Naive thymus-derived CD4-positive, alpha-beta T cell (primary cell): ENCODE measurements at regions of chr12 and their contacts with region 1.

Region 1: DNA sequence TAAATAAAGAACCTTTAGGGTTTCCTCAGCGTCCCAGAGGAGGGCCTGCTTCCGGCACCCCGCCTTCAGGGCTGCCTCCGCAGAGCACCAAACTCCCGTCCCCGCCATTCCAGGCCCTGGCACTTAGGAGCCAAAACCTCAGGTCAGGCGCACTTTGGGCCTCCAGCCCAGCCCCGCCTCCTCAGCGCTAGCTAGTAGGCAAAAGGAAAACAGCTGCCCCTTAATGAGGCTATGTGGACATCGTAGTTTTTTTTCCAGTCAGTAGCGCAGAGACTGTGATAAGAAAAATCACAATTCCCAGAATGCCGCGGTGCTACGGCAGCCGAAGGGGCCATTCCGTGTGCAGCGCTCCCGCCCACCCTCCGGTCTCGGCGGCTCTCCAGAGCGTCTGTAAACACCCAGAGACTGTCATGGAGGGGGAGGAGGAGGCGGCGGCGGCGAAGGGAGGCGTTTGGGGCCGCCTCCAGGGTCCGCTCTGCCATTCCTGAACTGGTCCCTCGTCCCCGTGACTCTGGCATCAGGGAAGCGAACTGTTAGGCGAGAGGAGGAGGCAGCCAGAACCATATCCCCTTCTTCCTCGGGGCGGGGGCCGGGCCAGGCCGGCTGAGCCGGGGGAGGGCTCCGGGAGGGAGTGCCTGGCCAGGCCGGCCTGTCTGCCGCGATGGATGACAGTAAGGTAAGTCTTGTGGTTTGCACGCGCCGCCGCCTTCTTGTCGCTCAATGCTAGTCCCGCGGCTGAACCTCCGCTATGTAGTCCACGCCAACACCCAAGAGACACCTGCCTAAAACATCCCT is at the start of gene CREBL2:
- DNase-seq: peak; percentile 61 to 91 (median 89)
- ATAC-seq: peak; percentile 97
- H3K4me3 ChIP-seq: peak within 1 kb of the TSS; percentile 94
- H3K4me3 Mint-ChIP-seq: peak within 1 kb of the TSS; percentile 84 to 99 (median 93)
- H3K27ac ChIP-seq: peak within 1 kb of the TSS; percentile 98
- H3K27ac Mint-ChIP-seq: peak within 1 kb of the TSS; percentile 91 to 100 (median 99)
- H3K4me1 ChIP-seq: peaks cover 12 to 18% of the 10 kb centered on the region in 2 donors
- H3K4me1 Mint-ChIP-seq: peaks cover 38 to 74% (median 57%) of the 10 kb centered on the region in 7 donors
- H3K27me3 ChIP-seq: no peaks in the 10 kb centered on the region
- H3K27me3 Mint-ChIP-seq: no peaks in the 10 kb centered on the region
- total RNA-seq, gene CREBL2: 17.3 to 39.5 (median 24.9) TPM

Region 2: DNA sequence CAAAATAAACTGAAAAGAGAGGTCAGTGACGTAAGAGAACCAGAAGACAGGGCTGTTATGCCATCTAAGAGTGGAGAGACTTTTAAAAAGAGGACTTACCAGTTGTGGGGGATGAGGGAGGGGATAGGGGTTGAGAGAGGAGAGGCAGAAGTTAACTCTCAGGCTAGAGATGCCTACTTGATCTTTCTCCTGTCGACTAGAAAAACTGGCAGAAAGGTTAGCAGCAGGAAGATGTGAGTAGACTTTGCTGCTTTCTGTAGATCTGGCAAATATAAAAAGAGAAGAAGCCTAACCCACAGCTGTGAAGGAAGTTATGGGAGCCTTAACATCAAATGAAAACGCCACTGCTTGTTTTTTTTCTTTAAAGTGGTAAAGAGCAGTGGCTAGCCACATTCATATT is 10.7 kb after region 1 on chr12:
- CTCF ChIA-PET with region 1: interaction called, 3 read pairs
- POLR2A ChIA-PET with region 1: interaction called, 40 read pairs
- intact Hi-C with region 1: loop called in 1 of 2 experiments (anchors 1 kb)
- DNase-seq: peak in 7 of 9 donors; percentile 44 to 76 (median 65)
- ATAC-seq: peak; percentile 87
- H3K4me3 ChIP-seq: peak overlapping the region; percentile 29
- H3K4me3 Mint-ChIP-seq: peak overlapping the region; percentile 1 to 79 (median 62)
- H3K27ac ChIP-seq: peak overlapping the region; percentile 72
- H3K27ac Mint-ChIP-seq: peak overlapping the region; percentile 70 to 95 (median 86)
- H3K4me1 ChIP-seq: peaks cover 27 to 40% of the 10 kb centered on the region in 2 donors
- H3K4me1 Mint-ChIP-seq: peaks cover 34 to 91% (median 83%) of the 10 kb centered on the region in 7 donors
- H3K27me3 ChIP-seq: no peaks in the 10 kb centered on the region
- H3K27me3 Mint-ChIP-seq: no peaks in the 10 kb centered on the region

Region 3: GRCh38 chr12:12645485-12645884 is 33.8 kb after region 1 on chr12:
- CTCF ChIA-PET with region 1: no interaction called
- POLR2A ChIA-PET with region 1: interaction called, 4 read pairs
- intact Hi-C with region 1: loop called in 1 of 2 experiments (anchors 5 kb)
- DNase-seq: peak in 8 of 9 donors; percentile 24 to 76 (median 62)
- ATAC-seq: peak; percentile 80
- H3K4me3 ChIP-seq: no peak overlapping the region
- H3K4me3 Mint-ChIP-seq: no peak overlapping the region
- H3K27ac ChIP-seq: no peak overlapping the region
- H3K27ac Mint-ChIP-seq: peak overlapping the region in 3 of 9 donors; percentile 42 to 79 (median 67)
- H3K4me1 ChIP-seq: no peaks in the 10 kb centered on the region
- H3K4me1 Mint-ChIP-seq: peaks cover 0 to 11% (median 3%) of the 10 kb centered on the region in 7 donors
- H3K27me3 ChIP-seq: no peaks in the 10 kb centered on the region
- H3K27me3 Mint-ChIP-seq: no peaks in the 10 kb centered on the region

Region 4: DNA sequence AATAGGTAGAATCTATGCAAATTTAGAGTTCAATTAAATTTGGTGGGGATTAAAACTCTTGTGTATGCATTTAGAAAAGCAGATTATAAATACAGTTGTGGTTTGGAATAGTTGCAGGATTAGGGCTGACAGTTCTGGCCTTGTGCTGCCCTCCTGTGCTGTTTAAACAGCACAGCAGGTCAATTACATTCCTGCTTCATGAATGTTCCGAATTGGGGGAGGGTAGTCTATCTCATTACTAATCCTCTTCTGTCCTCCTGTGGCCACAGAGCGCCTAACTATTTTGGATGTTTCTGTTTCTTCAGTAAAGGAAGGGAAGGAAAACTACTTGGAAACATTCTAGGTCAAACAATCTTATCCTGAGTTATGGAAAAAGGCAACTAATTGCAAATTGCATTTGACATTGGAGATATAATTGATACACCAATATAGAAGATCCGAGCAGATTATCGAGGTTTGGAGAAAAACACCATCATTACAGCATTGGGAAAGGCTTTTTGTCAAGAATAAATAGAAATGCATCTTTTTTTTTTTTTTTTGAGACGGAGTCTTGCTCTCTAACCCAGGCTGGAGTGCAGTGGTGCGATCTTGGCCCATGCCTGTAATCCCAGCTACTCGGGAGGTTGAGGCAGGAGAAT is 93.0 kb after region 1 on chr12:
- CTCF ChIA-PET with region 1: no interaction called
- POLR2A ChIA-PET with region 1: interaction called, 5 read pairs
- intact Hi-C with region 1: loop called in 1 of 2 experiments (anchors 2 kb)
- DNase-seq: peak in 7 of 9 donors; percentile 44 to 71 (median 60)
- ATAC-seq: peak; percentile 92
- H3K4me3 ChIP-seq: no peak overlapping the region
- H3K4me3 Mint-ChIP-seq: peak overlapping the region in 9 of 10 donors; percentile 16 to 76 (median 58)
- H3K27ac ChIP-seq: no peak overlapping the region
- H3K27ac Mint-ChIP-seq: peak overlapping the region; percentile 15 to 80 (median 64)
- H3K4me1 ChIP-seq: peaks cover 18 to 37% of the 10 kb centered on the region in 2 donors
- H3K4me1 Mint-ChIP-seq: peaks cover 17 to 35% (median 24%) of the 10 kb centered on the region in 7 donors
- H3K27me3 ChIP-seq: no peaks in the 10 kb centered on the region
- H3K27me3 Mint-ChIP-seq: no peaks in the 10 kb centered on the region

Region 5: GRCh38 chr12:12724661-12725545 is 113.2 kb after region 1 on chr12:
- CTCF ChIA-PET with region 1: no interaction called
- POLR2A ChIA-PET with region 1: interaction called, 23 read pairs
- intact Hi-C with region 1: loop called in 1 of 2 experiments (anchors 1 kb)
- DNase-seq: peak; percentile 78 to 97 (median 92)
- ATAC-seq: peak; percentile 77
- H3K4me3 ChIP-seq: peak overlapping the region; percentile 53
- H3K4me3 Mint-ChIP-seq: peak overlapping the region; percentile 87 to 98 (median 94)
- H3K27ac ChIP-seq: peak overlapping the region; percentile 99
- H3K27ac Mint-ChIP-seq: peak overlapping the region; percentile 96 to 99 (median 97)
- H3K4me1 ChIP-seq: peaks cover 28% of the 10 kb centered on the region in 2 donors
- H3K4me1 Mint-ChIP-seq: peaks cover 23 to 64% (median 56%) of the 10 kb centered on the region in 7 donors
- H3K27me3 ChIP-seq: no peaks in the 10 kb centered on the region
- H3K27me3 Mint-ChIP-seq: peaks cover 0 to 7% (median 0%) of the 10 kb centered on the region in 5 donors

Region 6: DNA sequence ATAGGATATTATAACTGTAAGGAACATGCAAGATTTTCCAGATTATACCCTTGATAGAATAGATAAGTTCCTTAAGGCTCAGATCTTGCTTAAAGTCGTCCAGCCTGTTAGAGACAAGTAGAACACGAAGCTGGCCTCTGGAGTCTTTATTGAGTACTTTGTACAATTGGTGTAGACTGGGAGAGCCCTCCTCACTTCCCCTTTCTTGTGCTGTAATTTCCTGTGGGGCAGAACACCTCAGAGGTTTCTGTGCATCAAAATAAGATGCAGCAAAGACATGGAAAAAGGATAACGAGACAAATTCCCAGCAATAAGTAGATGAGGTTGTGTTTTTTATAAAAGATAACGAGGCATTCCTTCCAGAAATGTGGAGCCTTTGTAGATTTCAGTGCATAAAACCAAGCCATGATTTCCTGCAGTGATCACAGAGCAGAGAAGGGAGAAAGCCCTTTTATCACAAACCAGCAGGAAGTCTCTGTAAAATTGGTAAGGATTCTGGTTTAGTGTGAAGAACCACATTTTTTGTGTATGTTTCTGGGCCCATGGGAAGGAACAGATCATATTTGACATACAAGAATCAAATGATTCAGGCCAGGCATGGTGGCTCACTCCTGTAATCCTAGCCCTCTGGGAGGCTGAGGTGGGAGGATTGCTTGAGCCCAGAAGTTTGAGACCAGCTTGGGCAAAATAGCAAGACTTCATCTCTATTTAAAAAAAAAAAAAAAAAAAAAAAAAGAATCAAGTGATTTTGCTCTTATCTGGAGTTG is 297.7 kb after region 1 on chr12:
- CTCF ChIA-PET with region 1: no interaction called
- POLR2A ChIA-PET with region 1: no interaction called
- intact Hi-C with region 1: no loop called
- DNase-seq: peak in 1 of 9 donors; percentile 6
- ATAC-seq: peak; percentile 44
- H3K4me3 ChIP-seq: no peak overlapping the region
- H3K4me3 Mint-ChIP-seq: peak overlapping the region in 8 of 10 donors; percentile 1 to 69 (median 48)
- H3K27ac ChIP-seq: no peak overlapping the region
- H3K27ac Mint-ChIP-seq: peak overlapping the region; percentile 10 to 91 (median 50)
- H3K4me1 ChIP-seq: peaks cover 0 to 14% of the 10 kb centered on the region in 2 donors
- H3K4me1 Mint-ChIP-seq: peaks cover 17 to 25% (median 22%) of the 10 kb centered on the region in 7 donors
- H3K27me3 ChIP-seq: no peaks in the 10 kb centered on the region
- H3K27me3 Mint-ChIP-seq: peaks cover 0 to 13% (median 0%) of the 10 kb centered on the region in 5 donors